Activated CD4-positive, alpha-beta T cell treated with anti-CD3 and anti-CD28 coated beads, Interleukin-2, amount 10 ng/mL, durations not matched to agents 24 days and 14 days (primary cell): ENCODE measurements at regions of chr18 and their contacts with region 1.

Region 1: DNA sequence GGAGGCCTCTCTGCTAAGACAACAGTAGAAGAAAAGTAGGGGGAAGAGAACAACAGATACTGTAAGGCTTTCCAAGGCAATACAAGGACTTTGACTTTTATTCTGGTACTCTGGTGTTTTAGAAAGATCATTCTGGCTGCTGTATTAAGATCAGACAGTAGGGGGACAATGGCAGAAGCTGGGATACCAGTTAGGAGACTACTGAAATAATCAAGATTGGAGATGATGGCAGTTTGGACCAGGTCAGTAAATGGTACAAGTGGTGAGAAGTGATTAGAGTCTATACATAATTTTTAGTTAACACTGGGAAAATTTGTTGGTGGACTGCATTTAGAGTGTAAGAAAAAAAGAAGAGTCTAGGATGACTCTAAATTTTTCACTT is 139.7 kb downstream of the ROCK1 start:
- DNase-seq: no peak
- H3K4me3 Mint-ChIP-seq: no peak overlapping the region
- H3K27ac Mint-ChIP-seq: no peak overlapping the region
- H3K4me1 Mint-ChIP-seq: peaks cover 1% of the 10 kb centered on the region
- H3K27me3 Mint-ChIP-seq: no peaks in the 10 kb centered on the region

Region 2: DNA sequence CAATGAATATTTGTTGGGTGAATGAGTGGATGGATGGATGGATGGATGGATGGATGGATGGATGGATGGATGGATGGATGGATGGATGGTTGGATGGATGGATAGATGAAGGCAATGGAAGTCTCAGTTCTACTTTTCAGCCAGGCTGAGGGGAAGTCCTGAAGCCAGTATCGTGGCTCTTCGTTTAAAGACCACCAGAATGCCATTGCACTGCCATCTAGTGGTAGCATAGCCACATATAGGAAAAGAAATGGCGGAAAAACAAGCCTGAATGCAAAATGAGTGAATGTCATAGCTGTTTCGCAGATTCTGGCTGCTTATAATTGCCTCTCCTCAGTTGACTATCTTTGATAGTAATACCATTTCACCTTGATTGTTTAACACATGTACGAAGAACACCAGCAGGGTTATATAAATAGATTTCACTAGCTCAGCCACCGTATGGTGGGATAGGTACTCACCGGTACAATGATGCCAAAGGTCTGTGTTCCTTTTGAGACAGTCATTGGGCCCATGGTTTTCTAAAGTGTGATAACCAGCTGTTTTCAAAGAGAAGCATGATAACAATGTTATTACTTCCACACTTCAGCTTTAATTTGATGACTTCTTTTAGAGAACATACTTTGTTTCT is 207.8 kb after region 1 on chr18:
- intact Hi-C with region 1: loop called (anchors 10 kb)
- DNase-seq: peak; percentile 81
- H3K4me3 Mint-ChIP-seq: no peak overlapping the region
- H3K27ac Mint-ChIP-seq: no peak overlapping the region
- H3K4me1 Mint-ChIP-seq: no peaks in the 10 kb centered on the region
- H3K27me3 Mint-ChIP-seq: no peaks in the 10 kb centered on the region

Region 3: DNA sequence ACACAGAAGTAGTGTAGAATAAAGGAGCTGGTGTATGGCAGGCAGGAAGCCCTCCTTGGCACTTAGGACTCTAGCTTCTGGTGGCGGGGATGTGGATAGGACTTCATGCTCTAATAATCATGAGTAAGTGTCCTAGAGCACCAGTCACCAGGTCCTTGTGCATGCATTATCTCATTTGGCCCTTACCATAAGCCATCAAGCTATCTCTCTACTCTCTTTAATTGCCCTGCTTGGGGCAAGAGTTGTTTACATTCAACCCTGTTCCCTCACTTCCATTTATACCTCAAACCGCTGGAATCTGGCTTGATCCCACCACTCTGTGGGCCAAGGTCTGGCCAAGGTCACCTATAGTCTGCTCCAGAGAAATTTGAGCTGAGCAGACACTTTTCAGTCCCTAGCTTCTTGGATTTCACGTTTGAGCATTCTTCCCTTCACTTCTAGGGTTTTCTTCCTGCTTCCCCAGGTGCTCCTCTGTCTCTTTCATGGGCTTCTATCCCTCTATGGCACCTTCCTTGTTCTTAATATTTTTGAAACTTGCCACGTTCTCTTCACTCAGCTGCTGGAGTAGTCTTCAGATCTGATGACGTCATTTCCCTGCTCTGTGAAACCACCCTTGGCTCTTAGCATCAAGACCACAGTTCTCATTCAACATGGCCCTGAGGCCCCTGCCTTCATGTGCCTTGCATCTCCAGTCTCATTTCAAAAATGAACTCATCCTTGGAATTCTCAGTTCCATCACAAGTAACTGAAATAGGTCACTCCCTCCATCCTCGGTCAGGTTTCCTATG is 1102.6 kb after region 1 on chr18:
- intact Hi-C with region 1: no loop called
- DNase-seq: no peak
- H3K4me3 Mint-ChIP-seq: no peak overlapping the region
- H3K27ac Mint-ChIP-seq: no peak overlapping the region
- H3K4me1 Mint-ChIP-seq: no peaks in the 10 kb centered on the region
- H3K27me3 Mint-ChIP-seq: no peaks in the 10 kb centered on the region